ENCODE measurements at regions of chr11 and their contacts with region 1.

Region 1: DNA sequence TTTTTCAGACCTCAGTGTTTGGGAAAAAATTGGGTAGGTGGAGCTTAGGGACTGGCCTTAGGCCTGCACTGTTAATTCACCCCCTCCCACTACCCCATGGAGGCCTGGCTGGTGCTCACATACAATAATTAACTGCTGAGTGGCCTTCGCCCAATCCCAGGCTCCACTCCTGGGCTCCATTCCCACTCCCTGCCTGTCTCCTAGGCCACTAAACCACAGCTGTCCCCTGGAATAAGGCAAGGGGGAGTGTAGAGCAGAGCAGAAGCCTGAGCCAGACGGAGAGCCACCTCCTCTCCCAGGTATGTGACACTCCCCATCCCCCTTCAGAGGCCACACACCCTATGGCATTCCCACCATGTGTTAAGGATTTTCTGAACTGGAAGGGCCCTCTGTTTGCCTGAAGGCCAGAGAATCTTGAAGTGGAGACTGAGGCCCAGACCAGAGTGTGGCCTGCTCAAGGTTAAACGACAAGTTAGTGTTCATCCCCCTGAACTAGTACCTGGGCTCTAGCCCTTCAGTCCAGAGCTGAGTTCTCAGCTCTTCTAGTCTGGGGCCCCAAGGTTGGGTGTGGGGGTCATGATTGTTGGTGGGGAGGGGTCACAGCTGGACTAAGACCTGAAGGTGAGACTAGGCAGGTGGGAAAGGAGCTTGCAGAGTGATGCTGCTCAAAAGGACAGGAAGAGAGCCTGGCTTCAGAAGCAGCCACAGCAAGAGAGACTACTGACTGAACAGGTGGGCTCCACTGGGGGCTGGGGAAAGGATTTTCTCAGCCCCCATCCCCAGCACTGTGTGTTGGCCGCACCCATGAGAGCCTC is 2.3 kb upstream of the FOLR1 start:
- DNase-seq: no peak
- H3K4me3 ChIP-seq: no peak overlapping the region
- H3K27me3 ChIP-seq: no peaks in the 10 kb centered on the region
- CTCF ChIP-seq: no peak

Region 2: GRCh38 chr11:72085621-72086351 is 103.9 kb before region 1 on chr11:
- CTCF ChIA-PET with region 1: interaction called, 27 read pairs
- POLR2A ChIA-PET with region 1: no interaction called
- DNase-seq: no peak
- H3K4me3 ChIP-seq: no peak overlapping the region
- H3K27me3 ChIP-seq: no peaks in the 10 kb centered on the region
- CTCF ChIP-seq: no peak

Region 3: DNA sequence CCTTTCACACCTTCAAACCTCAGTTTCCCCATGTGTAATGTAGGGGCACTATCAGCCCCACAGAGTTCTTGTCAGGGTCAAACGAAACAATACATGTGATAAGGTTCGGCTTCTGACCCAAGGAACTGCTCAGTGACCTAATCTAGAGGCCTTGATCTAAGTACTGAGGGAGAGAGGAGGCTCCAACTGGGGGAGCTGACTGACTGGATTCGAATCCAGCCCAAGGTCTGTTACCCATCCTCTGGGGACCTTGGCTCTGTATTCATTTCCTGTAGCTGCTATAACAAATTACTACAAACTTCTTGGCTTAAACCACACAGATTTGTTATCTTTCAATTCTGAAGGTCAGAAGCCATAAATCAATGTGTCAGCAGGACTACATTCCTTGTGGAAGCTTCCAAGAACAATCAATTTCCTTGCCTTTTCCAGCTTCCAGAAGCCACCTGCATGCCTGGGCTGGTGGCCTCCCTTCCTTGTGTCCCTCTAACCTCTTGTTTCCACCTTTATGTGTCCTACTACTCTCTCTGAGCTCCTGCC is 66.5 kb before region 1 on chr11:
- CTCF ChIA-PET with region 1: no interaction called
- POLR2A ChIA-PET with region 1: no interaction called
- DNase-seq: no peak
- H3K4me3 ChIP-seq: no peak overlapping the region
- H3K27me3 ChIP-seq: no peaks in the 10 kb centered on the region
- CTCF ChIP-seq: no peak

Region 4: DNA sequence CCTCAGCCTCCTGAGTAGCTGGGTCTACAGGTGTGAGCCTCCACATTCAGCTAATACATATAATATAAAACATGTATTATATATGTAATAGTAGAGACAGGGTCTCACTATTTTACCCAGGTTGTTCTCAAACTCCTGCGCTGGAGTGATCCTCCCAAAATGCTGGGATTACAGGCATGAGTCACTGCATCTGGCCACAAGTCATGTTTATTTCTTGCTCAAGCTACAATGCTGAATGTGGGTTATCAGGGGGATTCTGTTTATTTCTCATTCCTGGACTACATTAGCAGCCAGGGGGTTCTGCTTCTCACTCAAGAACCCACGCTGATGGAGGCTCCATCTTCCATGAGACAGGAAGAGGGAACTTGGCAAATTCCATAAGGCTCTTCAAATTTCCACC is 29.3 kb before region 1 on chr11:
- CTCF ChIA-PET with region 1: interaction called, 34 read pairs
- POLR2A ChIA-PET with region 1: no interaction called
- DNase-seq: no peak
- H3K4me3 ChIP-seq: no peak overlapping the region
- H3K27me3 ChIP-seq: no peaks in the 10 kb centered on the region; the same call in 1 of the 2 replicates
- CTCF ChIP-seq: no peak

Region 5: DNA sequence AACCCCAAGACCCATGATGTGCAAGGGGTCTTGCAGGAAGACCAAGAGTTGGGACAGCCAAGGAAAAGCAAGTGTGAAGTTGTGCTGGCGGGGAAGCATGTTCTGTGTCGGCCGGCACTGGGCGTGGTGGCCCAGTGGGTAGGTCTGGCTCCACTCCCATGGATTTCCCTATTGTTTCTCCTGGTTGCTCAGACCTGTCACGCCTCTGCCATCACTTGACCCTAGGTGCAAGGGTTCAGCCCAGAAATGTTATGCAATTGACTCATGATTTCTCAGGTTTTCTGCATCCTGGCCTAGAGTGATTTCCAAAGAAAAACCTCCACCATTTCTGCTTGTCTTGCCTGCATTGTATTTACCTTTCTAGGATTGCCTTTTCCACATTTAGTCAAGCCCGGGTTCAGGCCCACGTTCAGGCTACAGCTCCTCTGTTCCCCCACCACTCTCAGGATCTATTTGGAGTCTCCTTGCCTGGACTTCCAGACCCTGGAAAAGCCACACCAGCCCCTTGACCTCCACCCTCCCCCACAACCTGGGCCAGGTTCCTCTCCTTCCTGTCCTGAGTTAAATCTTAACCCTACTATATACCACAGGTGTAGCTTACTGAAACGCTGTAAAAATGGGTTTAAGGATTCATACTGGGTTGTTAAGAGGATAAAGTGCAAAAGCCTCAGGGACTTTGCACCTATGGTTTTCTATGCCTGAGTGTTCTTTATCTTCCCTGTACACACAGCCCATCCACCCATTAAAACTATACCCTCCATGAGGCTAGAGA is 15.2 kb before region 1 on chr11:
- CTCF ChIA-PET with region 1: interaction called, 19 read pairs
- POLR2A ChIA-PET with region 1: no interaction called
- DNase-seq: no peak
- H3K4me3 ChIP-seq: no peak overlapping the region
- H3K27me3 ChIP-seq: no peaks in the 10 kb centered on the region
- CTCF ChIP-seq: no peak

Region 6: GRCh38 chr11:72478659-72479058 is 289.0 kb after region 1 on chr11:
- CTCF ChIA-PET with region 1: no interaction called
- POLR2A ChIA-PET with region 1: no interaction called
- DNase-seq: no peak
- H3K4me3 ChIP-seq: no peak overlapping the region
- H3K27me3 ChIP-seq: peaks cover 6% of the 10 kb centered on the region
- CTCF ChIP-seq: no peak

Measured in BJ (cell line).